ENCODE measurements at regions of chr4 and their contacts with region 1.

Region 1: GRCh38 chr4:156475322-156475721 is 496.3 kb downstream of the PDGFC start:
- DNase-seq: no peak
- ATAC-seq: peak; percentile 57 to 85 (median 65)
- H3K4me3 ChIP-seq: no peak overlapping the region
- H3K27ac ChIP-seq: no peak overlapping the region
- H3K4me1 ChIP-seq: no peaks in the 10 kb centered on the region
- H3K27me3 ChIP-seq: peaks cover 0 to 4% (median 0%) of the 10 kb centered on the region in 9 donors
- CTCF ChIP-seq: peak; percentile 24 to 70 (median 50)
- POLR2A ChIP-seq: no peak

Region 2: DNA sequence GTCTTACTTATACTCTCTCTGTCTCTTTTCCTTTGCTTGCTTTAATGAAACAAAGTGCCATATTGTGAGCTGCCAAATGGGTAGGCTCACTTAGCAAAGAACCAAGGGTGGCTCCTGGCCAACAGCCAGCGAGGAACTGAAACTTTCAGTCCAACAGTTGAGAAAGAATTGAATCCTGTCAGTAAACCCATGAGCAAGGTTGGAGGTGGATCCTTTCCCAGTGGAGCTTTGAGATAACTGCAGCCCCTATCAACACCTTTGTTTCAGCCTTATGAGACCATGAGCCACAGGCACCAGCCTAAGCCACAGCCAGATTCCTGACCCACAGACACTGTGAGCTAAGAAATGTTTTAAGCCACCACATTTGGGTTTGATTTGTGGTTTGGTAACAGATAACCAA is 134.1 kb after region 1 on chr4:
- intact Hi-C with region 1: no loop called
- DNase-seq: peak in 4 of 5 donors; percentile 20 to 61 (median 38)
- ATAC-seq: no peak
- H3K4me3 ChIP-seq: no peak overlapping the region
- H3K27ac ChIP-seq: no peak overlapping the region
- H3K4me1 ChIP-seq: no peaks in the 10 kb centered on the region
- H3K27me3 ChIP-seq: no peaks in the 10 kb centered on the region
- CTCF ChIP-seq: no peak
- POLR2A ChIP-seq: no peak

Region 3: GRCh38 chr4:156677131-156677531 is 201.8 kb after region 1 on chr4:
- intact Hi-C with region 1: loop called in 2 of 10 experiments (anchors 10 kb)
- DNase-seq: no peak
- ATAC-seq: no peak
- H3K4me3 ChIP-seq: no peak overlapping the region
- H3K27ac ChIP-seq: no peak overlapping the region
- H3K4me1 ChIP-seq: peaks cover 0 to 3% (median 0%) of the 10 kb centered on the region in 12 donors
- H3K27me3 ChIP-seq: no peaks in the 10 kb centered on the region
- CTCF ChIP-seq: peak in 5 of 12 donors; percentile 5 to 35 (median 31)
- POLR2A ChIP-seq: no peak

Region 4: DNA sequence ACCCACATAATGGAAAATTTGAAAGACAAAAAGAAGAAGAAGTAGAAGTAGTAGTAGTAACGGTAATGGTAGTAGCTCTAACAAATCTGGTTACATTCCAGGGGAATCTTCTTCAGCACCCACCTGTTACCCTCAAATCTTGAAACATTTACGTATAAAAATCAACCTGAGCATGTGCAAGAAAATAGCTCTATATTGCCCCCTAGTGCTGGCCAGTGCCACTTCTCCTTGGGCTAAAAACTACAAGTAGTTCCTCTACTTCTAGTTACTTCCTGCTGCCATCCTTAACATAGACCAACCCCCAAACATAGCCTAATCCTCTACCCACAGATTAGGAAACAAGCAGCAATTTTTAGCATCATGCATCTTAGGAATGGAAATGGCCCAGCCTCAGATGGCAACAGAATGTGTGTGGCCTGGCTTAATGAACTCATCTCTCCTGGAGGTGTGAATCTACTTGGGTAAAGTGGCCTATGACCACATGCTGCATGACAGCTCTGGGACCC is 493.2 kb after region 1 on chr4:
- intact Hi-C with region 1: loop called in 8 of 10 experiments (anchors 5 to 10 kb)
- DNase-seq: peak in 3 of 5 donors; percentile 53 to 57 (median 56)
- ATAC-seq: peak in 3 of 4 donors; percentile 36 to 40 (median 39)
- H3K4me3 ChIP-seq: peak overlapping the region in 5 of 12 donors; percentile 72 to 91 (median 78)
- H3K27ac ChIP-seq: peak overlapping the region in 7 of 12 donors; percentile 1 to 83 (median 15)
- H3K4me1 ChIP-seq: peaks cover 0 to 56% (median 8%) of the 10 kb centered on the region in 12 donors
- H3K27me3 ChIP-seq: peaks cover 0 to 3% (median 0%) of the 10 kb centered on the region in 9 donors
- CTCF ChIP-seq: peak; percentile 62 to 88 (median 75)
- POLR2A ChIP-seq: no peak

Region 5: GRCh38 chr4:157128395-157128794 is 653.1 kb after region 1 on chr4:
- intact Hi-C with region 1: loop called in 1 of 10 experiments (anchors 10 kb)
- DNase-seq: no peak
- ATAC-seq: peak in 1 of 4 donors; percentile 54
- H3K4me3 ChIP-seq: no peak overlapping the region
- H3K27ac ChIP-seq: no peak overlapping the region
- H3K4me1 ChIP-seq: no peaks in the 10 kb centered on the region
- H3K27me3 ChIP-seq: no peaks in the 10 kb centered on the region
- CTCF ChIP-seq: peak in 9 of 12 donors; percentile 21 to 53 (median 47)
- POLR2A ChIP-seq: no peak

Region 6: DNA sequence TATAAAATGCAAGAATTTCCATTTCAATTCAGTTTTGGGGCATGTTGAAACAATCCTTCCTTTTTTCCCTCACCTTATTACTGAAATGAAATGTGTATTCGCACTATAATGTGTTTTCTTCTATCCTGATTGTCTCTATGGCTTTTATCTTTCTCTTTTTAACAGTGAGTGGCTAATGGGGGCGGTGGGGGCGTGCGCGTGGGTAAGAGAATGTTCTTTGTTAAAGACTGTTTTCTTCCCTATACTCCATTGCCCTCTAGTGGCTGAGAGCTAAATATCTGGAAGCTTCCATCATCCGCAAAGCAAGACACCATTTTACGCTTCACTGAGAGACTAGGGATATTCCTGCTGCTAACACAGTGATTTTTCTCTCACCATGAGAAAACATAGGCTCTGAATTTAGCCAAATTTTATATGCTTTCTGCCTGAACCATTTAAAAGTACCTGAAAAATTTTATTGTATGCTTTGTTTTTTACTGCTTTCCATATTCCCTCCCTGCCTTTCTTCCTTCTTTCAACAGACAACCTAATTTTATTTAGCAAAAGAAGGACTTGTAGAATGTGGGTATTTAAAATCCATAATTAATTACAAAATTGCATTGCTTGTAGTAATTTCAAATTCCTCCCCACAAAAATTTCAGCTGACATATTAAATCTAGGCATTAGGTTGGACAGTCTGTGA is 1503.5 kb after region 1 on chr4:
- intact Hi-C with region 1: loop called in 5 of 10 experiments (anchors 5 to 10 kb)
- DNase-seq: peak in 4 of 5 donors; percentile 27 to 38 (median 32)
- ATAC-seq: peak; percentile 67 to 88 (median 79)
- H3K4me3 ChIP-seq: peak overlapping the region in 5 of 12 donors; percentile 5 to 39 (median 27)
- H3K27ac ChIP-seq: no peak overlapping the region
- H3K4me1 ChIP-seq: peaks cover 0 to 8% (median 0%) of the 10 kb centered on the region in 12 donors
- H3K27me3 ChIP-seq: no peaks in the 10 kb centered on the region
- CTCF ChIP-seq: peak; percentile 72 to 91 (median 84)
- POLR2A ChIP-seq: no peak

Measured in heart left ventricle (tissue), 16 donors.